A673 (cell line): ENCODE measurements at regions of chr19 and their contacts with region 1.

Region 1: DNA sequence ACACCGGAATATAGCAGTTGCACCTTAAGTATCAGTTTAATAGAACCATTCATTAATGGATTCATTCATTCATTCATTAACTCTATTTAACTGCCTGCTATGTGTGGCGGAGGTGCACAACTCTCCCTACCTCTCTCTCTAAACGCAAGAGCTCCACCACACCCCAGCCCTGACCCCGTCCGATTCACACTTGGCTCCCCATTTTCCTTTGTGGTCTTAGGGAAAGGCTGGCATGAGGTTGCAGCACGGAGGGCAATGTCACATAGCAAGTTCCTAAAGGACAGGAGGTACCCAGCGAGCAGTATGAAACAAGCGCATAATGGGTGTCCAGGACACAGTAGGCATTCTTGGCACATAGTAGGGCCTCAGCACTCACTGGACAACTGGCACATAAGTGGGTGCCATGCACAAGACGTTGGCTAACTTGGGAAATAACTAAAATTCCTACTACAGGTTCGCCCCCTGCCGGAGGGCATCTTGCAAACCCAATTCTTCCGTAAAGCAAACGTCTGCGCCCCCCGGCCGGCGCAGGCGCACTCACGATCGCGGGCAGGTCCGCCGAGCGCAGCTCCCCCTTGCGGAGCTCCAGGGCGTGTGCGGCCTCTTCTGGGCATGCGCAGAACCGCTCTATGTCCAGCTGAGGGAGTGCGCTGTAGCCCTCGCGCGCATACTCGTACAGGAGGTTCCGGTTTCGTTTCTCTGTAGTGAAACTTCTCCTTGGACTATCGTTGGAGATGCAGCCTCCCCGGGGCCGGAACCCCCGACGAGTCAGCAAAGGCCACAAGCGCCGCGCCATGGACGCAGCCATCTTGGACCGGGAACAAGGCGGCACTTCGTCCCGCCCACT is at the start of gene SARS2:
- DNase-seq: peak; percentile 96
- H3K4me3 ChIP-seq: peak within 1 kb of the TSS; percentile 69
- H3K27ac ChIP-seq: peak within 1 kb of the TSS; percentile 96
- H3K4me1 ChIP-seq: peaks cover 13% of the 10 kb centered on the region
- H3K27me3 ChIP-seq: no peaks in the 10 kb centered on the region
- CTCF ChIP-seq: peak; percentile 100
- total RNA-seq, gene SARS2: 56.3 and 58.6 TPM in 2 replicates

Region 2: DNA sequence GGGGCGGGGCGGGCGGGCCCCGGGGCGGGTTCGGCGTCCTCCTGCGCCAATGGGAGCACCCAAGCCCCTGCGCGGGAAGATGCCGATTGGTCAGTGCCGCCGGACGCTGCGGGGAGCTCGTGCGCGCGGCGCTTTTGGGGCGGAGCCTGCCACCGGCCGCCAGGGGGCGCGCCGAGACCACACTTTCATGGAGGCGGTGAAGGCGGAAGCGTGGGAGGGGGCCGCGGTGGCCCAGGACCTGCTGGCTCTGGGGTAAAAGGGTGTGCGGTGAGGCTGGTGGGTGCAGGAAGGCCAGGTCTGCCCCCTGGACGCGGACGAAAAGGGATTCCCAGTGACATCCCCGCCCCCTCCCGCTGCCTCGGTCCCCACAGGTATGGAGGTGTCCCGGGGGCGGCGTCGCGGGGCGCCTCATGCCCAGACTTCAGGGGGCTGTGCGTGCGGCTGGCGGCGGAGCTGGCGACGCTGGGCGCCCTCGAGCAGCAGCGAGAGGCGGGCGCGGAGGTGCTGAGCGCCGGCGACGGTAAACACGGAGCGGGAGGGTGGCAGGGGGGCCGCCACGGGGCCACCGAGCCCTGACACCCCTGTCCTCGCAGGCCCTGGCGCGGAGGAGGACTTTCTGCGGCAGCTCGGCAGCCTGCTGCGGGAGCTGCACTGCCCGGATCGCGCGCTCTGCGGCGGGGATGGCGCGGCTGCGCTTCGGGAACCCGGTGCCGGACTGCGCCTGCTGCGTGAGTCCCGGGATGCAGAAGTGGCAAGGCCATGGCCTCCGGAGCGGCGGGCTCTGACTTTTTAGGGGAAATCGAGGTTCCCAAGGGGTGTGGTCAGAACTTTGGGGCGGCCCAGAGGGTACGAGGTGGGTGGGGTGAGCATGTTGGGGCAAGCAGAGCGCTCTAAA is 526.9 kb before region 1 on chr19 and contains the start of gene FAM98C:
- CTCF ChIA-PET with region 1: no interaction called
- POLR2A ChIA-PET with region 1: no interaction called
- intact Hi-C with region 1: loop called (anchors 2 kb)
- DNase-seq: peak; percentile 98
- H3K4me3 ChIP-seq: peak within 1 kb of the TSS; percentile 87
- H3K27ac ChIP-seq: peak within 1 kb of the TSS; percentile 70
- H3K4me1 ChIP-seq: no peaks in the 10 kb centered on the region
- H3K27me3 ChIP-seq: no peaks in the 10 kb centered on the region
- CTCF ChIP-seq: peak; percentile 93
- total RNA-seq, gene FAM98C: 11.8 and 12.1 TPM in 2 replicates

Region 3: DNA sequence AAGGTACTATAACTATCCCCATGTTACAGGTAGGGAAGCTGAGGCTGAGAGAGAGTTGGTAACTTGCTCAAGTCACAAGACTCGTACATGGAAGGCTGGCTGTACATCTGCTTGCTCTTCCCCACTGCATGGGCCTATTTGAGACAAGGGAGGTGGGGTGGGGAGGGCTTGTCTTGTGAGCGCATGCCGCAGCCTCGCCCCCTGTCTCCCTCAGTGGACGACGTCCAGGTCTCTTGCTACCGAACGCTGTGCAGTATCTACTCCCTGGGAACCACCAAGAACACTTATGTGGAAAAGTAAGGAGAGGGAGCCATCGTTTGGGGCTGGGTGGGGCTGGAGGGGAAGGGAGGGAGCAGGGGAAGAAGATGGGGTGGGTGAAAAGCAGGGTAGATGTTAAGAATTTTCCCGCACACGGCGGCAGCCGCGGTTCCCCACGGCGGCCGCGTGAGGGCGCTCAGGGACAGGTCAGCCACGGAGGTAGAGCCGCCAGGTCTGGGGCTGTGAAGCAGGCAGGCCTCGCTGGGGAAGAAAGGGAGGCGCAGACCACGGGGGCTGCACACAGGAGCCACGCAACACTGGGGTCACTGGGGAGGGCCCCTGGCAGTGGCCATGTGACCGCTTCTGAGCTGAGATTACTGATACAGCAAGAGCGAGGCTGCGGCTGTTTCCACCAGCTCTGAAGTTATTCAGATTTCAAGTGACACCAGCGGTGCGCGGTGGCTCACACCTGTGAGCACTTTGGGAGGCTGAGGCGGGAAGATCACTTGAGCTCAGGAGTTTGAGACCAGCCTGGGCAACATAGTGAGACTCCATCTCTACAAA is 415.1 kb before region 1 on chr19:
- CTCF ChIA-PET with region 1: no interaction called
- POLR2A ChIA-PET with region 1: no interaction called
- intact Hi-C with region 1: loop called (anchors 10 kb)
- DNase-seq: peak; percentile 68
- H3K4me3 ChIP-seq: no peak overlapping the region
- H3K27ac ChIP-seq: no peak overlapping the region
- H3K4me1 ChIP-seq: no peaks in the 10 kb centered on the region
- H3K27me3 ChIP-seq: no peaks in the 10 kb centered on the region
- CTCF ChIP-seq: peak; percentile 92

Region 4: DNA sequence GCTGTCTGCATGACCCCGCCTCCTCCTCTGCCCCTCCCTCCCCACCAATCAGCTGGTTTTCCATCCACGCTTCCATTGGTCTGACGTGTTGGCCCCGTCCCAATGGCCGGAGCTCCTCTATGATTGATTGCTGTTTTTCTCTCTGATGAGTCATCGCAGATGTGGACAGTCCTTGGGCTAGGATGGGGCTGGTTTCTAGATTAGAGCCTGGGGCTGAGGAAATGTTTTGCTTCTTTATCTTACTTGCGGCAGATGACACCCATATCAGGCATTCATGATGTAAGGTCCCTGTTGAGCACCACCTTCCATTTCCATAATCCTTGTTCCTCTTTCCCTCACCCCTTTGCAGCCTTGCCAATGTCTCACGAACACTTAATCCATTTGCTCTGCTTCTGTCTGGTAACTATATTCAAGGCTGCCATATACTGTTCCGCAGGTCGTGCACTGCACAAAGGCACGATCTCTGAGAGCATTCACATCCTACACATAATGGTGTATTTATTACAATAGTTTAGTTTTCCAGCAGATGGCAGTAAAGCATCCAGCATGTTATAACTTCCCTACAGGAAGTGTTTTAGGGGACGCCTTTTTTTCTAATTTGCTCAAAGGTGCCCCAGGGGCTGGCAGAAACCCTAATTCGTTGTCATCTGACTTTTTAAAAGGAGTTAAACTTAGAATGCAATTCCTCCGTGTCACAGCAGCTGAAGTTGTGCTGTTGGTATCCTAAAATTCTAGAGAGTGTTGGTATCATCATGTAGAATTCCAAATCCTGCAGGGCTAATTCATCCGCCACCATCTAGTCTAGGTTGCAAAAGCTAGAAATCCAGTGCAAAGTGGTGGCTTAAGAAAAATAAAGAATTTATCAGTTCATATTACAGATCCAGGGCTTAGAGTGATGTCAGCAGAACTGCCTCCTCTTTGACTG is 385.9 kb before region 1 on chr19:
- CTCF ChIA-PET with region 1: no interaction called
- POLR2A ChIA-PET with region 1: no interaction called
- intact Hi-C with region 1: loop called (anchors 10 kb)
- DNase-seq: peak; percentile 91
- H3K4me3 ChIP-seq: peak overlapping the region; percentile 39
- H3K27ac ChIP-seq: peak overlapping the region; percentile 55
- H3K4me1 ChIP-seq: peaks cover 7% of the 10 kb centered on the region
- H3K27me3 ChIP-seq: no peaks in the 10 kb centered on the region
- CTCF ChIP-seq: peak; percentile 69

Region 5: DNA sequence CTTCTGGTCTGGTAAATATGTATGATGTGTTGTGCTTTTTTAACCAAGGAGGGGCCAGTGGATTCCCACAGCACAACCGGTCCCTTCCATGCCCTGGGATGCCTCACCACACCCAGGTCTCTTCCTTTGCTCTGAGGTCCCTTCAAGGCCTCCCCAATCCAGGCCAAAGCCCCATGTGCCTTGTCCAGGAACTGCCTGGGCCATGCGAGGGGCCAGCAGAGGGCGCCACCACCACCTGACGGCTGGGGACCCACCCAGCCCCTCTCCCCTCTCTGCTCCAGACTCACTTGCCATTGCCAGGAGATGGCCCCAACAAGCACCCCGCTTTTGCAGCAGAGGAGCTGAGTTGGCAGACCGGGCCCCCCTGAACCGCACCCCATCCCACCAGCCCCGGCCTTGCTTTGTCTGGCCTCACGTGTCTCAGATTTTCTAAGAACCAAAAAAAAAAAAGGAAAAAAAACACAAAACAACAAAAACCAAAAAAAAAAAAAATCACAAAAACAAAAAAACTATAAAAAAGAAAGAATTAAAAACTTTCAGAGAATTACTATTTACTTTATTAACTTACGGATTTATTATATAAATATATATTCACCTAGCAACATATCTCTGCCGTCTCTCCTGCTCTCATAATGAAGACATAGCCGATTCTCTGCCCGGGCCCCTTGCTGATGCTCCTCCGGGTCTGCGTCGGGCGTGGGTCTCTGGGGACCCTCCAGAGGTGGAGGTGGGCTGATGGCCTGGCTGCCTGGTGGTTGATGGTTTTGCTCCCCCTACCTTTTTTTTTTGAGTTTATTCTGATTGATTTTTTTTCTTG is 200.3 kb before region 1 on chr19:
- CTCF ChIA-PET with region 1: no interaction called
- POLR2A ChIA-PET with region 1: no interaction called
- intact Hi-C with region 1: loop called (anchors 5 kb)
- DNase-seq: peak; percentile 70
- H3K4me3 ChIP-seq: no peak overlapping the region
- H3K27ac ChIP-seq: no peak overlapping the region
- H3K4me1 ChIP-seq: no peaks in the 10 kb centered on the region
- H3K27me3 ChIP-seq: no peaks in the 10 kb centered on the region
- CTCF ChIP-seq: peak; percentile 88

Region 6: DNA sequence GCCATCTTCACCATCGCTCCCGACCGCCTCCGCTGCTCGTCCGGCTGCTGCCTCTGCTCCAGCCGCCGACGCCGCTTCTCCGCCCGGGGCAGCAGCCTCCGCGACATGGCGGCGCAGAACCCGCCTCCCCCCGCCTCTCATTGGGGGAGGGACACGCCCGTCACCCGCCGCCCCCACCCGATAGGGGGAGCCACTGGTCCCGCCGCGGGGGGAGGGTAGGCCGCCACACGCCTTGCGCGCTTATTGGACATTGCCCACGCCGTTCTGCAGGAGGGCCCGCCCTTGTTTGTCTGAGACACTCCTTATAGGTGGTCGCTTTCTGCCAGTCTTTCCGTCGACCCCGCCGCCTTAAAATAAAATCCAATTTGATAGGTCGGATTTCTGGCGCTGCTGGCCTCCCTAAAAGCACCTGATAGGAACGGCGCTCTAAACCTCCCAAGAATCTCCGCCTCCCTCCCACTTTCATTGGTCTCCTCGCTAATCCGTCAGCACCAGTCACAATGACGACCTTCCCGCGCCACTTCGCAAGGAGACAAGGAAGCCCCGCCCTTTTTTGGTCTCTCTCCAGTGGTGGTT is 80.2 kb before region 1 on chr19 and contains the start of gene HNRNPL:
- CTCF ChIA-PET with region 1: no interaction called
- POLR2A ChIA-PET with region 1: no interaction called
- intact Hi-C with region 1: loop called (anchors 2 kb)
- DNase-seq: no peak
- H3K4me3 ChIP-seq: peak within 1 kb of the TSS; percentile 88
- H3K27ac ChIP-seq: peak within 1 kb of the TSS; percentile 100
- H3K4me1 ChIP-seq: peaks cover 13% of the 10 kb centered on the region
- H3K27me3 ChIP-seq: no peaks in the 10 kb centered on the region
- CTCF ChIP-seq: peak; percentile 42
- total RNA-seq, gene HNRNPL: 642 and 647 TPM in 2 replicates

Region 7: DNA sequence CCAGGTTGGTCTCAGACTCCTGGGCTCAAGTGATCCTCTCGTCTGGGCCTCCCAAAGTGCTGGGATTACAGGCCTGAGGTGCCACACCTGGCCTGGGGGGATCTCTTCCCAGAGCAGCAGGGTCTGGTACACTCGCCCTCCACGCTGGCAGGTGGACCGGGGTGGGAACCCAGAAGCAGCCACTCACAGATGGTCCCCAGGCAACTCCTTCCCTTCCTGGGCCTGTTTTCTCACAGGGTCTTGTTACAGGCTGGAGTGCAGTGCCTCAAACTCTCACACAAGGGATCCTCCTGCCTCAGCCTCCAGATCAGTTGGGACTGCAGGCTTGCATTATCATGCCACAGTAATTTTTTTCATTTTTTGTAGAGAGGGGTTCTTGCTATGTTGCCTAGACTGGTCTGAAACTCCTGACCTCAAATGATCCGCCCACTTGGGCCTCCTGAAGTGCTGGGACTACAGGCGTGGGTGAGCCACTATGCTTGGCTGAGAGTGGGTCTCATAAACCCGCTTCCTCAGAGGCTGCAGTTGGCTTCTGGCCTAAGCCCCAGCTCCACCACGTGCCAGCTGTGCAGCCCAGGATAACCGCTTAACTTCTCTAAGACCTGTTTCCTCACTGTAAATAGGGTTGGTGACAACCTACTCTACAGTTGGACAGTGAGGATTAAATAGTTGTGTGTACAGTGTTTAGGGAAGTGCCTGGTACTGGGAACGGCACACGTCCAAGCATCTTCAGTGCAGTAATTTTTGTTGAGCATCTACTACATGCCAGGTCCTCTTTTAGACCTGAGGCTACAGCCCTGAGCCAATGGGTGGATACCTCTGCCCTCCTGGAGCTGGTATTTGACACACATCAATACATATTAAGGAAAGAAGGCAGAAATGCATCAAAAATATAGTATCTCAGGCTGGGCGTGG is 17.3 kb before region 1 on chr19:
- CTCF ChIA-PET with region 1: no interaction called
- POLR2A ChIA-PET with region 1: no interaction called
- intact Hi-C with region 1: no loop called
- DNase-seq: no peak
- H3K4me3 ChIP-seq: no peak overlapping the region
- H3K27ac ChIP-seq: no peak overlapping the region
- H3K4me1 ChIP-seq: peaks cover 9% of the 10 kb centered on the region
- H3K27me3 ChIP-seq: no peaks in the 10 kb centered on the region
- CTCF ChIP-seq: no peak